ENCODE measurements at regions of chr14 and their contacts with region 1.

Region 1: DNA sequence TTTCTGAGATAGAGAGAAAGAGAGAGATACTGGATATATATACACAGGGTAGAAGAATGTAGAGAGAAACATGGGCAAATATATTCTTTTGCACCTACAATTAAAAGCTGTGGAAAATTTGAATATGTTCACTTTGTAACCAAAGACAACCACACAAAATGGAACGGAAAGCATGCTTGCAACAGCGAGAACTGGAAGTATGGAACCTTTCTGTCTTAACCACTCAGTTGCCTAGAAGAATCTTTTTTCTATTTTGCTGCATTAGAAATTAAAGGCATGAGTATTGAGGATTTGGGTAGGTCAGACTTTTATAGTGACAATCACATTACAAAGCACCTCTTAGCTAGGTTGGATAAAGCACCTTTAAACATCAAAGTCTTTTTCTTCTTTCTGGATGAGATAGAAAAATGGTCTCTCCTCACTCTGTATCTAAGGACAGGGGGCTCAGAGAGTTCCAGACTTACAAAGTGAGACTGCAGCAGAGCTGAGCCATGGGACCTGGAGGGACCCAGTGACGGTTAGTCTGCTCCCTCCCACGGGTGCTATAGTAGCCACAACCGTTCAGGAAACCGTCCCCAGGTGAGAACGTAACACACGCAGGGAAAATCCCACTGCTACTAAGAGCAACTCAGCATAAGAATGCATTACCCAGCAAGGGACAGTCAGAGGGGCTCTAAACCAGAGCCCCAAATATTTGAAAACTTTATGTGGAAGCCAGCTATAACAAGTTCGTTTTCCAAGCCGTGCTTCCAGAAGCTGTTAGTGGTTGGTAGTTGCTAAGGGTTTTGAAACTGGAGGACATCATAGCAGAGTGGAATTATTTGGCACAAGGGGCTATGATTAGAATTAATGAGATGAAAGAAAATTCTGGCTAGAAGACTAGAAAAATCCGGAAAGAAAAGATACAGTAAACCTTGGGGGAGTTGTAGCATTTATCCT is 97.1 kb downstream of the DAD1 start:
- DNase-seq: peak; percentile 37
- CTCF ChIP-seq: no peak

Region 2: GRCh38 chr14:22539831-22540230 is 47.9 kb after region 1 on chr14:
- in situ Hi-C with region 1: loop called (anchors 5 kb)
- DNase-seq: no peak
- CTCF ChIP-seq: no peak